Calu3 (cell line): ENCODE measurements at regions of chr16 and their contacts with region 1.

Region 1: DNA sequence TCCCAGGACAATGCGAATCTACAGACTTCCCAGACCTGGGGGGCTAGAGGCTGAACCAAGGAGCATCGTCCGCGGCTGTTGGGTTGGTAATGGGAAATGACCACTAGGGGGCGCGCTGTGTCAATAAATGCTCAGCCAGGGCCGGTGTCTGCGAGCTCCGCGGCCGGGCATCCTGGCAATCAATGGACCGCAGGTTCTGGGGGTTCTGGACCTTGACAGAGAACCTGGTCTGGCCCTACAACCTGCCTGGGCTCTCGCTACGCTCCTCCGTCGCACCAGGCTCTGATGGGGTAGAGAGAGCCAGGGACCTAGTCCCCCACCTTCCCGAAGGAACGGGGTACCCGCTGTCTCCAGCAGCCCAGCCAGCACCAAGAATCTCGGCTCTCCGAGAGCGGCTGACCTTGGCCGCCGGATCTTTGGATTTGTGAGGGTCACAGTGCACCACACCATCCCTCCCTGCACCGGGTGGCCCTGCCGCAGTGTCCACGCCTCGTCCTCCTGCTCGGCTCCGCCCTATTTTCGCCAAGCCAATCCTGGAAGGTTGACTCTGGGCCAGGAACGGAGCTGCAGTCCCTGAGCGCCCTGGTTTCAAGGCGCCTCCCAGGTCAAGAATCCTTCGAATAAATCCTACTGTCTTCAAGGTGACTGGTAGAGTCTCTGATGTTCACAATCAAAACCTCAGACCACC is 20.4 kb upstream of the BEAN1 start:
- DNase-seq: peak; percentile 93
- H3K4me3 Mint-ChIP-seq: peak overlapping the region; percentile 78
- H3K27ac Mint-ChIP-seq: peak overlapping the region; percentile 64
- H3K4me1 Mint-ChIP-seq: peaks cover 35% of the 10 kb centered on the region
- H3K27me3 Mint-ChIP-seq: peaks cover 30% of the 10 kb centered on the region
- CTCF ChIP-seq: peak; percentile 93

Region 2: DNA sequence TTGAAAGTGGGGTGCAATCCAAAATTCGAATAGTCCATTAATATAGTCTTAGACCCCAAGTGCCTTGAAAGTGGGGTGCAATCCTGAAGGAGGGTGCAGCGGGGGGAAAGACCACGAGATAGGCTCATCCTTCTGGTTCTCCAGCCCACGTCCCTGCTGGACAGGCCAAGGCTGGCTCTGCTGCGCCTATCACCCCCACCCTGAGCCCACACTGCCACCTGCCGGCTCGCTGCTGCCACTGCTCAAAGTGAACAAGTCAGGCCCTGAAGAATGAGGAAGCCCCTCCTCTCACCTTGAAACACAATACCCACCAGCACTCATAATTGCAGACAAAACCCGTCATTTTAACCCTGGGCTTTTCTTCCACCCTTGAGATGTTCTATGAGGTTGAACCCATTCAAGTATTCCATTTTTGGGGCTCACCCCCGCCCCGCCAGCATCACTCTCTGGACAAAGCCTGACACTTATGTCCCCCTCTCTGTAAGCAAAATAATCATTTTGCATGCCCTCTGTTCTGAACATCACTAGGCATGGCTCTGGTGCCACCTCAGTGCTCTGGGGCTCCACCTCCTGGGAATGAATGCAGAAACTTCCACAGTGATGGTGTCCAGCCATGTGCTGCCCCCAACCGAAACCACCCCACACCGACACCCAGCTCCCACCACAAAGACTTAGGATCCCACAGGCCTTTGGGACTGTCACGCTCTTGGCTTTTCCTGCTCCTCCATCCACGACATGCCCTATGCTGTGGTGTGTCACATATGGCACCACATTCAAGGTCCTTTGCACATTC is 77.2 kb after region 1 on chr16:
- CTCF ChIA-PET with region 1: interaction called, 7 read pairs
- intact Hi-C with region 1: loop called (anchors 1 kb)
- DNase-seq: peak; percentile 93
- H3K4me3 Mint-ChIP-seq: no peak overlapping the region
- H3K27ac Mint-ChIP-seq: peak overlapping the region; percentile 25
- H3K4me1 Mint-ChIP-seq: peaks cover 36% of the 10 kb centered on the region
- H3K27me3 Mint-ChIP-seq: no peaks in the 10 kb centered on the region
- CTCF ChIP-seq: peak; percentile 96

Region 3: GRCh38 chr16:66516808-66517585 is 110.3 kb after region 1 on chr16:
- CTCF ChIA-PET with region 1: interaction called, 11 read pairs
- intact Hi-C with region 1: no loop called
- DNase-seq: peak; percentile 98
- H3K4me3 Mint-ChIP-seq: peak overlapping the region; percentile 60
- H3K27ac Mint-ChIP-seq: peak overlapping the region; percentile 99
- H3K4me1 Mint-ChIP-seq: peaks cover 82% of the 10 kb centered on the region
- H3K27me3 Mint-ChIP-seq: no peaks in the 10 kb centered on the region
- CTCF ChIP-seq: no peak

Region 4: DNA sequence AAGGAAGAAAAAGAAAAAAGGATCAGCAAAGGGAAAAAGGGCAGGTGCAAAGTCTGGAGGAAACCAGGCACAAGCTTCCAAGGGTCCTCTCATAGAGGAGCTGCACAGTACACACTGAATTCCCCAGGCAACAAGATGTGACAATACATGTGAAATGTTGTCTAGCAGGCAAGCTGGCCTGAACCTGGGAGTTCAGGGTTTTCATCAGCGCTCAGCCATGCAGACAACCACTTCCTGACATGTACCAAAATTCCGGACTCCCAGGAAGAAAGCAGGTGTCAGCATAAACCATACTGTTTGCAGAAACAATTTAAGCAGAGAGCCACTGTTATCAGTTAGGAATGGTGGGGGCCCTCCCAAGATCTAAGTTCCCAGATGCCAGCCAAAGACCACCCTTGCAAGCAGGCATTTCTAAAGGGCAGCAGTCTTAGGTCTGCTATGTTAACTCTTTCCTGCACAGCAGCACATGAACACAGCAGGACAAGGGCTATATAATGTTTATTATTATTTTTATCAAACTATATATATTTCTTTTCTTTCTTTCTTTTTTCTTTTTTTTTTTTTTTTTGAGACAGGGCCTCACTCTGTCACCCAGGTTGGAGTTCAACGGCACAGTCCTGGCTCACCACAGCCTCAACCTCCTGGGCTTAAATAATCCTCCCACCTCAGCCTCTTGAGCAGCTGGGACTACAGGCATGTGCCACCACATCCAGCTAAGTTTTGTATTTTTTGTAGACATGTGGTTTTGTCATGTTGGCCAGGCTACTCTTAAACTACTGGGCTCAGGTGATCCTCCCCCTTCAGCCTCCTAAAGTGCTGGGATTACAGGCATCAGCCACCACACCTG is 133.2 kb after region 1 on chr16:
- CTCF ChIA-PET with region 1: no interaction called
- intact Hi-C with region 1: no loop called
- DNase-seq: no peak
- H3K4me3 Mint-ChIP-seq: no peak overlapping the region
- H3K27ac Mint-ChIP-seq: no peak overlapping the region
- H3K4me1 Mint-ChIP-seq: peaks cover 8% of the 10 kb centered on the region
- H3K27me3 Mint-ChIP-seq: no peaks in the 10 kb centered on the region
- CTCF ChIP-seq: no peak

Region 5: GRCh38 chr16:66608241-66609138 is 201.8 kb after region 1 on chr16:
- CTCF ChIA-PET with region 1: interaction called, 9 read pairs
- intact Hi-C with region 1: loop called (anchors 5 kb)
- DNase-seq: peak; percentile 97
- H3K4me3 Mint-ChIP-seq: no peak overlapping the region
- H3K27ac Mint-ChIP-seq: no peak overlapping the region
- H3K4me1 Mint-ChIP-seq: peaks cover 29% of the 10 kb centered on the region
- H3K27me3 Mint-ChIP-seq: no peaks in the 10 kb centered on the region
- CTCF ChIP-seq: peak; percentile 95

Region 6: GRCh38 chr16:66872943-66873684 is 466.4 kb after region 1 on chr16:
- CTCF ChIA-PET with region 1: interaction called, 14 read pairs
- intact Hi-C with region 1: loop called (anchors 5 kb)
- DNase-seq: peak; percentile 98
- H3K4me3 Mint-ChIP-seq: peak overlapping the region; percentile 75
- H3K27ac Mint-ChIP-seq: peak overlapping the region; percentile 56
- H3K4me1 Mint-ChIP-seq: peaks cover 23% of the 10 kb centered on the region
- H3K27me3 Mint-ChIP-seq: no peaks in the 10 kb centered on the region
- CTCF ChIP-seq: peak; percentile 96

Region 7: GRCh38 chr16:68367030-68367429 is 1960.4 kb after region 1 on chr16:
- CTCF ChIA-PET with region 1: no interaction called
- intact Hi-C with region 1: no loop called
- DNase-seq: peak; percentile 67
- H3K4me3 Mint-ChIP-seq: no peak overlapping the region
- H3K27ac Mint-ChIP-seq: no peak overlapping the region
- H3K4me1 Mint-ChIP-seq: no peaks in the 10 kb centered on the region
- H3K27me3 Mint-ChIP-seq: peaks cover 44% of the 10 kb centered on the region
- CTCF ChIP-seq: peak; percentile 53